HCT116 (cell line): ENCODE measurements at regions of chr12 and their contacts with region 1.

Region 1: DNA sequence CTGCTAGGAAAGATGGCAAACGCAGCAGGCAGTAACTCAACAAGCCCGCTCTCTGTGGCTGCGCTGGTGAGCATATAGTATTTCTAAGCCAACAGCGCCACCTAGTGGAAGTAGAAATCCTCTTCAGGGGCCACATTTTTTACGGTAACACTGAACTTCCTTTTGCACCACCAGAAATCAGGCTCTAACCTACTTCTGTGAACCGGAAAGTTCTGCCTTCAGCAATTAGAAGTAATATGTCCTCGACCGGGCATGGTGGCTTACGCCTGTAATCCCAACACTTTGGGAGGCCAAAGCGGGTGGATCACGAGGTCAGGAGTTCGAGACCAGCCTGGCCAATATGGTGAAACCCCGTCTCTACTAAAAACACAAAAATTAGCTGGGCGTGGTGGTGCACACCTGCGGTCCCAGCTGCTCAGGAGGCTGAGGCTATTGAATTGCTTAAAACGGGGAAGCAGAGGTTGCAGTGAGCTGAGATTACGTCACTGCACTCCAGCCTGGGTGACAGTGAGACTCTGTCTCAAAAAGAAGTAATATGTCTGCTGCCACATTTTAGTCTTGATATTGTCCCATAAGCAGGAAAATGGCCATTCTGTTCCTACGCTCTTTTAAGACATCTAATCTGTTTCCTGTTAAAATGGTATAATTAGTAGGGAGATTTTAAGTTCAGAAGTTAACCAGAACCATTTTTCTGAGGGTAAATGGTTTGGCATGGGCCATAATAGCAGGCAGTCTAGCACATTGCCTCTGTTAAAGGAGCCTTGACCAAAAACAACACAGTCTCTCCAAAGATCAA is 26.8 kb downstream of the APOBEC1 start:
- DNase-seq: peak; percentile 69
- ATAC-seq: peak; percentile 93
- H3K4me3 ChIP-seq: no peak overlapping the region
- H3K27ac ChIP-seq: no peak overlapping the region
- H3K4me1 ChIP-seq: peaks cover 0 to 7% of the 10 kb centered on the region in 2 experiments; a peak in 1 of 4 replicates
- H3K27me3 ChIP-seq: no peaks in the 10 kb centered on the region
- CTCF ChIP-seq: peak; percentile 58 to 93 (median 85)
- POLR2A ChIP-seq: no peak
- RAD21 ChIP-seq: peak; percentile 96

Region 2: DNA sequence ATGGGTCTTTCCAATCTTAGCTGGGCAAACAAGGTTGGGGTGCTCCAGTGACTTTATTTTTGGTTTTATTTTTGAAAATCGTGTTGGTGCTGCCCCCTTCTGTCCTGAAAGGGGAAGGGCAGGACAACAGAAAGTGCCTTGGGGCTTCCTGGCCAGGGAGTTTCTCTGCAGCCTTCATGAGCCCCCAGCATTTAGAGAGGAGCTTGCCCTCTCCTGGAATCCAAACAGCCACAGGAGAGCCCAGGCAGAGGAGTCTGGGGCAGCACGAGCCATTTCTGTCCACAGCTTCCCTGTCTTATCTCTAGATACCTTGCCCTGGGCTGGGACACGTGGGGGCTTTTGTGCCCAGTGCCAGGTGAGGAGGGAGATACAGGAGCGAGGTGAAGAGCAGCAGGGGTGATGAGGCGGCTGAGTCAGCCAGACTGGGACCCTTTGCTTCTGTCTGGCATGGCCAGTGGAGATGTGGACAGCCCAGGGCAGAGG is 525.5 kb before region 1 on chr12:
- CTCF ChIA-PET with region 1: no interaction called
- POLR2A ChIA-PET with region 1: no interaction called
- RAD21 ChIA-PET with region 1: no interaction called
- intact Hi-C with region 1: no loop called
- DNase-seq: no peak
- ATAC-seq: peak; percentile 12; the same call in 1 of the 2 replicates
- H3K4me3 ChIP-seq: no peak overlapping the region
- H3K27ac ChIP-seq: no peak overlapping the region
- H3K4me1 ChIP-seq: peaks cover 4 to 9% of the 10 kb centered on the region in 2 experiments; a peak in 2 of 4 replicates
- H3K27me3 ChIP-seq: no peaks in the 10 kb centered on the region
- CTCF ChIP-seq: peak; percentile 74 to 88 (median 82)
- POLR2A ChIP-seq: no peak
- RAD21 ChIP-seq: peak; percentile 73

Region 3: GRCh38 chr12:7142056-7142644 is 496.8 kb before region 1 on chr12:
- CTCF ChIA-PET with region 1: interaction called, 3 read pairs
- POLR2A ChIA-PET with region 1: no interaction called
- RAD21 ChIA-PET with region 1: interaction called in 1 of 2 experiments, 3 read pairs
- intact Hi-C with region 1: loop called (anchors 2 kb)
- DNase-seq: no peak
- ATAC-seq: peak; percentile 93
- H3K4me3 ChIP-seq: no peak overlapping the region
- H3K27ac ChIP-seq: no peak overlapping the region
- H3K4me1 ChIP-seq: no peaks in the 10 kb centered on the region
- H3K27me3 ChIP-seq: no peaks in the 10 kb centered on the region
- CTCF ChIP-seq: peak; percentile 68 to 91 (median 86); a peak in 5 of 6 replicates
- POLR2A ChIP-seq: no peak
- RAD21 ChIP-seq: peak; percentile 59

Region 4: DNA sequence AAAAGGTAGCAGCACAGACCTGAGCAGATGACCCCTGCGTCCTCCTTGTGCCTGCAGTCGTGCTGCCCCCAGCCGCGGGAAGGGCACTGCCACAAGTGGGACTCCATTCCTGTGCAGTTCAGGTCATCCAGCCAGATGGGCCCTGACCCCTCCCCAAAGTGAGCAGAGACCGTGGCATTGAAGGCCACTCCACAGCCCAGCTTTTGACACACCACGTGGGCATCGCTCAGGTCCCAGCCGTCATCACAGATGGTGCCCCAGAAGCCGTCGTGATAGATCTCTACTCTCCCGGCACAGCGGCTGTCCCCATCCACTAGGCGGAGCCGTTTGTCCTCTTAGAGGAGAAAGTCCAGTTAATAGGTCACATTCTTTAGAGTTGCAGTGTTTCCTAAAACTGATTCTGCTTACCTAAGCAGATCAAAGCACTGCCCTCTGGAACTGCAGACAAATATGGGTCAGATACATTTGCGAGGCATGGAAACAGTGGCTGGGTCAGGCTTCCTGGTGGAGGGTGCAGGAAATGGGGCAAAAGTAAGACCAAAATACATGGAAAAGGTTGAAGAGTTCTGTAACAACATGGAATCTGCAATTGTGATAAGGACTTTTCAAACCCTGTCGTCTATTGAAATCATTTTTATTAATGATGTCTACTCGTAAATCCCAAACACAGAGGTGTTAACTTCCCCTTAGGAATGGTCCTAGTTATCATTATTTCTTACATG is 264.4 kb before region 1 on chr12:
- CTCF ChIA-PET with region 1: no interaction called
- POLR2A ChIA-PET with region 1: no interaction called
- RAD21 ChIA-PET with region 1: no interaction called
- intact Hi-C with region 1: loop called (anchors 2 kb)
- DNase-seq: peak; percentile 47
- ATAC-seq: peak; percentile 96
- H3K4me3 ChIP-seq: no peak overlapping the region
- H3K27ac ChIP-seq: no peak overlapping the region
- H3K4me1 ChIP-seq: peaks cover 2 to 16% of the 10 kb centered on the region in 2 experiments; a peak in 2 of 4 replicates
- H3K27me3 ChIP-seq: no peaks in the 10 kb centered on the region
- CTCF ChIP-seq: peak; percentile 59 to 82 (median 78); a peak in 5 of 6 replicates
- POLR2A ChIP-seq: no peak
- RAD21 ChIP-seq: peak; percentile 77

Region 5: DNA sequence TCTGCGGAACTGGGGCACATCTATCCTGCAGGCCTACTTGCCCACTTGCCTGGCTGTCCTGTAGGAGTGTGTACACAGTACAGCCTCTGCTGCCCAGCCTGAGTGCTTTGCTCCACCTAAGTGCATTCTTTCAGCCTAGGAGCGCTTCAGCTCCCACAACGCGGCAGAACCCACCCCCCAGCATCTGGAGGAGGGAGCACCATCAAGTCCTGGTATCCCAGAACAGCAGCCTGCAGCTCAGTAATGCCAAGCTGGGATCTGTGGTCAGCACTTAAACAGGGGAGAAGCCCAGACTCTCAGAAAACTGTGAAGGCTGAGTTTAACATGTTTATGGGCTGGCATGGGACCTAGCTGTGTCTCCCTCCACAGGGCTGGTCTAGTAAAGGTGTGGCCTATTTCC is 55.4 kb before region 1 on chr12:
- CTCF ChIA-PET with region 1: no interaction called
- POLR2A ChIA-PET with region 1: no interaction called
- RAD21 ChIA-PET with region 1: no interaction called
- intact Hi-C with region 1: loop called (anchors 1 kb)
- DNase-seq: no peak
- ATAC-seq: peak; percentile 20; the same call in 1 of the 2 replicates
- H3K4me3 ChIP-seq: no peak overlapping the region
- H3K27ac ChIP-seq: no peak overlapping the region
- H3K4me1 ChIP-seq: peaks cover 4 to 23% of the 10 kb centered on the region in 2 experiments; a peak in 3 of 4 replicates
- H3K27me3 ChIP-seq: no peaks in the 10 kb centered on the region
- CTCF ChIP-seq: no peak
- POLR2A ChIP-seq: no peak
- RAD21 ChIP-seq: no peak

Region 6: GRCh38 chr12:7995266-7995963 is 356.5 kb after region 1 on chr12:
- CTCF ChIA-PET with region 1: interaction called, 3 read pairs
- POLR2A ChIA-PET with region 1: no interaction called
- RAD21 ChIA-PET with region 1: no interaction called
- intact Hi-C with region 1: loop called (anchors 2 kb)
- DNase-seq: peak; percentile 64
- ATAC-seq: peak; percentile 99
- H3K4me3 ChIP-seq: no peak overlapping the region
- H3K27ac ChIP-seq: no peak overlapping the region
- H3K4me1 ChIP-seq: peaks cover 0 to 12% of the 10 kb centered on the region in 2 experiments; a peak in 2 of 4 replicates
- H3K27me3 ChIP-seq: no peaks in the 10 kb centered on the region
- CTCF ChIP-seq: peak; percentile 73 to 92 (median 85)
- POLR2A ChIP-seq: no peak
- RAD21 ChIP-seq: peak; percentile 88